ENCODE measurements at regions of chr1 and their contacts with region 1.

Region 1: GRCh38 chr1:182259229-182259872 is 132.2 kb downstream of the GLUL start:
- DNase-seq: peak; percentile 64
- ATAC-seq: peak; percentile 59 to 79

Region 2: DNA sequence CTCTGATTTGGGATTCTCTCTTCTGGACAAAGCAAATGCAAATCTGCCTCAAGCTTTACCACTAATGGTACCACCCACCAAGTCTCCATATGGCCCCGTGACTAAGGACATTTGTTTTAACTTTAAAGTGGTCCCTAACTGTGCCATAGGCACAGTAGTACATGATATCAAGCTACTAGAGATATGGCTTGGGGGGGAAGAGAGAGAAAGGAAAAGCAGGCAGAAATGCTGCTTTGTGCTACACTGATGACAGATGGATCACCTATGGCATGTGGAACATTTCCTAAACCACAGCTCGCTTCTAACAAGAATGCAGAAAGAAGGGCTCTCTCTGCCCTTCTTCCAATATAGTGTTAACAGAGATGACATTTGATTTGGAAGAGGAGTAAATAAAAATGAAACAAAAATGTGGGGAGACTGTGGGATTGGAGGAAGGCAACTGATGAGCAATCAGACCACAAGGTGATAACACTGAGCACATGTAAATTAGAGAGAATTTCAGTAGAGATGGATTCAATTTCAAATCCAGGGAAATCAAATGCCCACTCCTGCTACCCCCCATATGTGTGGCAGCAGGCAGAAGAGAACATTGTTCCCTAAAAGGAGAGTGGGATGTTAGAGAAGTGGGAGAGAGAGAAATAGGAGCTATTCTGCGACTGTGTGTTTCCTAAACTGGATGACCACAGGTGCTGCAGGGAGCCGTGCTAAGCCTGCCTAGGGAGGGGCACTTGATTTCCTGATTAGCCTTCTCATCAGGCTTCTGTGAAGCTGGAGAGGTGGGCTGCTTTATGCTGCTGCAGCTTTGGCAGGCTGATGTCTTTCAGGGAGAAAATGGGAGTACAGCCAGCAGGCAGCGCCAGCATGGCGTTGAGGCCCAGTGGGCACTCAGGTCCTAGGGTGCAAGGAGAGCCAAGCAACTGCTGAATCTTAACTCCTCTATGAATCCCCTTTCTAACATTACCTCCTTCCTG is 273.1 kb before region 1 on chr1:
- intact Hi-C with region 1: no loop called
- DNase-seq: no peak
- ATAC-seq: no peak

Region 3: GRCh38 chr1:182120411-182121239 is 138.7 kb before region 1 on chr1:
- intact Hi-C with region 1: no loop called
- DNase-seq: peak; percentile 64
- ATAC-seq: peak; percentile 88 to 95

Region 4: DNA sequence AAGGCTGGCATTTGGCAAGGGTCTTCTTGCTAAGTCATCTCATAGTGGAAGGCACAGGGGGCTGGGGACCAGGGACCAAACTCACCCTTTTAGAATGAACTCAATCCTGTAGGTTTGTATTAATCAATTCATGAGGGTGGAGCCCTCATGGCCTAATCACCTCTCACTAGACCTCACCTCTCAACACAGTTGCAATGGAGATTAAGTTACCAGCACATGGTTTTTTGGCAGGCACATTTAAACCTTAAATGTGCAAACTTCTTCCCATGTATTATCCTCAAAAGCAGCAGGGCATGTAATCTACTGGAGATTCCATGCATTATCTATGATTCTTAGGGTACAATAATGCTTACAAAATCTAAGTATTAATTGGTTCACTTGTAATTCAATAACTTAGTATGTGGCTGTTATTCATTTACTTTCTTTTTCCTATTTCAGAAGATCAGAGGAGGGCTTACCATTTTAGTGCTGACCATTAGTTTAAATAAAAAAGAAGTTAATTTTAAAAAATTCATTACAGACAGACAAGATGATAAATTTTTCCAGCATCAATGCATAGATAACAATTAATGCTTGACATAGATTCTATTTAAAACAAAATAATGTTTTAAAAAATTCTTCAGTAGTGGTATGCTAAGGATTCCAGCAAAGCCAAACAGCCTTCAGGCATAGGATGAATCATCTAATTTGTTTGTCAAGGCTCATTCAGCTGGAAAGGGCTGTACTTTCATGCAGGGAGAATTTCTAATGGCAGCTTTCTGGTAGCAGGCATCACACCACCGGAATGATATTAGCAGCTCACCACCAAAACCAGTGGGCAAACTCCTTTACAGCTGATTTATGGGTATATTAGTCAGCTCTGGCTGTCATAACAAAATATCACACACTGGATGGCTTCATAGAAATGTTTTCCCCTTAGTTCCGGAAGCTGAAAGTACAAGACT is 73.3 kb before region 1 on chr1:
- intact Hi-C with region 1: no loop called
- DNase-seq: no peak
- ATAC-seq: peak in 1 of 2 donors; percentile 65

Region 5: GRCh38 chr1:182391362-182392044 is 132.2 kb after region 1 on chr1 and contains the start of gene GLUL:
- intact Hi-C with region 1: loop called in 1 of 2 experiments (anchors 10 kb)
- DNase-seq: peak; percentile 93
- ATAC-seq: peak; percentile 93 to 95
- total RNA-seq, gene GLUL: 462 to 760 TPM